Body of pancreas (tissue), 4 donors: ENCODE measurements at regions of chr12 and their contacts with region 1.

Region 1: GRCh38 chr12:131642101-131642540 is 68.8 kb upstream of the SFSWAP start:
- DNase-seq: no peak
- ATAC-seq: no peak
- H3K4me3 ChIP-seq: no peak overlapping the region
- H3K27ac ChIP-seq: no peak overlapping the region
- H3K4me1 ChIP-seq: no peaks in the 10 kb centered on the region
- H3K27me3 ChIP-seq: no peaks in the 10 kb centered on the region
- CTCF ChIP-seq: no peak
- POLR2A ChIP-seq: no peak

Region 2: DNA sequence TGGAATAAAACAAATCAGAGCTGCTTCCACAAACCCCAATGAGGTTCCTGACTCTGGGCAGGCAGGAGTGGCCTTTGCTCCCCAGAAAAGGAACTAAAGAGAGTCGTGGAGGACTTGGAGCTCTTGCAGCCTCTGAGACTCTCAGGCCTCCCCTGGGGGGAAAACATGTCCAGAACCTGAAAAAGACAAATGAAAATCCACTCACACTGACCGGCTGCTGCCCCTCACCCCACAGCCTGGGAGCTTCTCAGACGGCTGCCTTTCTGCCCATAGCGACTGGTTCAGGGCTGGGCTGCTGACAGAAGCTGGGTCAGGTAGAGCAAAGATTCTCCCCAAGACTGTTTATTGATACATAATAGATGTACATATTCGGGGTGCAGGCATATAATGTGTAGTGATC is 332.4 kb before region 1 on chr12:
- intact Hi-C with region 1: loop called (anchors 2 kb)
- DNase-seq: no peak
- ATAC-seq: no peak
- H3K4me3 ChIP-seq: no peak overlapping the region
- H3K27ac ChIP-seq: no peak overlapping the region
- H3K4me1 ChIP-seq: no peaks in the 10 kb centered on the region
- H3K27me3 ChIP-seq: no peaks in the 10 kb centered on the region
- CTCF ChIP-seq: no peak
- POLR2A ChIP-seq: no peak